IMR-90 (cell line): ENCODE measurements at regions of chr2 and their contacts with region 1.

Region 1: GRCh38 chr2:199757233-199757870 is 93.6 kb downstream of the FTCDNL1 start:
- DNase-seq: no peak
- ATAC-seq: peak; percentile 21; the same call in 1 of the 2 replicates
- H3K4me3 ChIP-seq: no peak overlapping the region
- H3K27ac ChIP-seq: no peak overlapping the region
- H3K4me1 ChIP-seq: no peaks in the 10 kb centered on the region; the same call in 1 of the 2 replicates
- H3K27me3 ChIP-seq: peaks cover 3% of the 10 kb centered on the region; the same call in 1 of the 2 replicates
- CTCF ChIP-seq: no peak
- POLR2A ChIP-seq: no peak
- RAD21 ChIP-seq: no peak

Region 2: GRCh38 chr2:199505755-199506403 is 251.5 kb before region 1 on chr2:
- CTCF ChIA-PET with region 1: no interaction called
- POLR2A ChIA-PET with region 1: no interaction called
- dilution Hi-C with region 1: no loop called
- in situ Hi-C with region 1: no loop called
- intact Hi-C with region 1: no loop called
- DNase-seq: no peak
- ATAC-seq: no peak
- H3K4me3 ChIP-seq: no peak overlapping the region
- H3K27ac ChIP-seq: no peak overlapping the region
- H3K4me1 ChIP-seq: no peaks in the 10 kb centered on the region
- H3K27me3 ChIP-seq: no peaks in the 10 kb centered on the region
- CTCF ChIP-seq: no peak
- POLR2A ChIP-seq: no peak
- RAD21 ChIP-seq: no peak

Region 3: GRCh38 chr2:199806179-199806578 is 48.8 kb after region 1 on chr2:
- CTCF ChIA-PET with region 1: no interaction called
- POLR2A ChIA-PET with region 1: no interaction called
- dilution Hi-C with region 1: no loop called
- in situ Hi-C with region 1: no loop called
- intact Hi-C with region 1: loop called (anchors 1 kb)
- DNase-seq: peak; percentile 74
- ATAC-seq: peak; percentile 90
- H3K4me3 ChIP-seq: no peak overlapping the region
- H3K27ac ChIP-seq: peak overlapping the region; percentile 74; the same call in 1 of the 2 replicates
- H3K4me1 ChIP-seq: peaks cover 15% of the 10 kb centered on the region; the same call in 1 of the 2 replicates
- H3K27me3 ChIP-seq: no peaks in the 10 kb centered on the region
- CTCF ChIP-seq: no peak
- POLR2A ChIP-seq: no peak
- RAD21 ChIP-seq: no peak